HepG2 (cell line): ENCODE measurements at regions of chr14 and their contacts with region 1.

Region 1: GRCh38 chr14:69648477-69649451 is 37.4 kb downstream of the SUSD6 start:
- DNase-seq: peak; percentile 83
- ATAC-seq: peak; percentile 92
- H3K4me3 ChIP-seq: peak overlapping the region; percentile 32 to 53 (median 34)
- H3K27ac ChIP-seq: peak overlapping the region; percentile 71
- H3K4me1 ChIP-seq: peaks cover 72% of the 10 kb centered on the region
- H3K27me3 ChIP-seq: no peaks in the 10 kb centered on the region
- CTCF ChIP-seq: no peak
- EP300 ChIP-seq: no peak; a peak in 1 of 4 replicates
- POLR2A ChIP-seq: no peak
- RAD21 ChIP-seq: no peak

Region 2: GRCh38 chr14:69637503-69638030 is 11.2 kb before region 1 on chr14:
- CTCF ChIA-PET with region 1: no interaction called
- POLR2A ChIA-PET with region 1: interaction called, 19 read pairs
- in situ Hi-C with region 1: no loop called
- intact Hi-C with region 1: no loop called
- DNase-seq: peak; percentile 60
- ATAC-seq: peak; percentile 90
- H3K4me3 ChIP-seq: peak overlapping the region in 2 of 3 experiments; percentile 8 to 38; a peak in 2 of 6 replicates
- H3K27ac ChIP-seq: peak overlapping the region; percentile 23
- H3K4me1 ChIP-seq: peaks cover 72% of the 10 kb centered on the region
- H3K27me3 ChIP-seq: no peaks in the 10 kb centered on the region
- CTCF ChIP-seq: no peak
- EP300 ChIP-seq: peak in 1 of 2 experiments; percentile 21; a peak in 1 of 4 replicates
- POLR2A ChIP-seq: no peak
- RAD21 ChIP-seq: no peak

Region 3: DNA sequence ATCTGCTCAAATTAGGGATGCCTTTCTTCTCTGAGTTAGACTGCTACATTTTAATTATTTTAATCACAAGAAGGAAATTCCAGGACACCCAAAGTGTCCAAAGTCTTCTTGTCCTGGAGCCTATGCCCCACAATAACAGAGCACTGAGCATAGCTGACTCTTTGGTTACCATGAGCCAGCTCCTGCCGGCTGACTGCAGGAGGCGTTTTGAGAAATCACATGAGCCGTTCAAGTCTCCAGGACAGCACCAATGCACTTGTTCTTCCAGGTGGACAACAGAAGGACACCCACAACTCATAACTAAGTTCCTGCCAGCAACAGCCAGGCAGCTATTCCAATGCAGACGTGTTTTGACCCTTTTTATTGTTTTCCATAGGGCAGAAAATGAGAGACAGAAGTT is 72.1 kb after region 1 on chr14:
- CTCF ChIA-PET with region 1: no interaction called
- POLR2A ChIA-PET with region 1: no interaction called
- in situ Hi-C with region 1: no loop called
- intact Hi-C with region 1: loop called (anchors 5 kb)
- DNase-seq: no peak
- ATAC-seq: peak; percentile 43; the same call in 2 of the 3 replicates
- H3K4me3 ChIP-seq: no peak overlapping the region
- H3K27ac ChIP-seq: no peak overlapping the region
- H3K4me1 ChIP-seq: peaks cover 31% of the 10 kb centered on the region
- H3K27me3 ChIP-seq: peaks cover 0 to 2% of the 10 kb centered on the region in 2 experiments; a peak in 1 of 5 replicates
- CTCF ChIP-seq: no peak
- EP300 ChIP-seq: no peak
- POLR2A ChIP-seq: no peak
- RAD21 ChIP-seq: no peak

Region 4: DNA sequence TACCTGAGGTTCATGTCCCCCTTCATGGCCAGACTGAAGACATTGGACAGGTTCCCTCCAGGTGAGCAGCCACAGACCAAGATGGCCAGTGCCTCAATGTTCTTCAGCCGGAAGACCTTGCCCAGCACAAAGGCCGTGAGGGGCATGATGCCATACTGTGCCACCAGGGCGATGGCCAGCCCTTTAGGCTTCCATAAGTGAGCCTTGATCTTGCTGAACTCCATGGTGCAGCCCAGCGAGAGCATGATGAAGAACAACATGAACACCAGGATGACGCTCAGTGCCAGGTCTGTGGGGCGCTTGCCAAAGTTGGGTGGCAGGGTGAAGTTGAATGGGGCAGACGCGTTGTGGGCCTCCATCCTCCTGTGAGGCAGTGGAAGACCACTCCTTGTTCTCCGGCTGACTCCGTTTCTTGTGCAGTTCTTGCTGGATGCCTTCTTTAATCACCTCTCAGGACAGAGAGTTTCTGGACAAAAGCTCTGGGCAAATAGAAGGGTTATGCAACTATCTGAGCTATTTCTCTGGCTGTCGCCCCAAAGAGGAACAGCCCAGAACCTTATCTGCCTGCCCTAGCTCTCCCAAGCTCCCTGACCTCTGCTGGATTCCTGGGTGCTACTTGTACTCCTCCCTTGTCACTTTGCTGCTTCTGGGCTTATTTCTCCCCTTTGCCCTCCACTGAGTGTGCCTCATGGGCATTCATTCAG is 148.2 kb after region 1 on chr14 and contains the start of gene SLC10A1:
- CTCF ChIA-PET with region 1: no interaction called
- POLR2A ChIA-PET with region 1: no interaction called
- in situ Hi-C with region 1: no loop called
- intact Hi-C with region 1: no loop called
- DNase-seq: peak; percentile 23
- ATAC-seq: peak; percentile 43
- H3K4me3 ChIP-seq: 0 out of 6 replicates have a peak within 1 kb of the TSS, but pooled peaks of 1 of the 3 experiments have one; percentile 9
- H3K27ac ChIP-seq: peak within 1 kb of the TSS; percentile 25
- H3K4me1 ChIP-seq: peaks cover 68% of the 10 kb centered on the region
- H3K27me3 ChIP-seq: no peaks in the 10 kb centered on the region
- CTCF ChIP-seq: no peak
- EP300 ChIP-seq: no peak
- POLR2A ChIP-seq: no peak
- RAD21 ChIP-seq: no peak
- total RNA-seq, gene SLC10A1: not detected in 2 replicates